Panc1 (cell line): ENCODE measurements at regions of chr15 and their contacts with region 1.

Region 1: DNA sequence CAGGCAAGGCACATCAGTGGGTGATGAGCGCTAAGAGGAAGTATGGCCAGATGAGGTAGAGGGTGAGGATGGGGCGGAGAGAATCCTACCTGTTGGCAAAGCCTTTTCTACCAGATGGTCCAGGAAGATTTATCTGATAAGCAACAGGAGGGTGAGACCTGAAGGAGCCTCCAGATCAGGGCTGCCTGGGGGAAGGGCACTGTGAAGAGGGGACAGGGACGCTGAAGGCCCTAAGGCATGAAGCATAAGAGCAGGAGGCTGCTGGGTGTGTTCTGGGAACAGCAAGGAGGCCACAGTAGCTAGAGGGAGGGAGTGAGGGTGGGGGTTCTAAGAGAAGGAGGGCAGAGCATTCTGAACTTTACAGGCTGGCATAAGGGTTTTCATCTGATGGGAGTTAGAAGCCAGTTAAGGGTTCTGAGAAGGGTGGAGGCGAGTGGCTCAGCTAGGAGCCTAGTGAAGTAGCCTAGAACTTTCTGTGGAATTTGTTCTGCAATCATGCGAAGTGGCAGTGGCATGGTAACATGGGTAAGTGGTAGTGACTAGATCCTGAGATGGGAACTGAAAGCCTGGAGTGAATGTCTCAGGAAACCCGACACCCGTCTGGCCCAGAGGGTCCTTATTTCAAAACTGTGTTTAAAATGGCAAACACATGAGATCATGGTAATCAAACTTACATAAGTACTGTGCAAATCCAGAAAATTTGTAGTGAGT is 29.9 kb downstream of the CGNL1 start:
- DNase-seq: no peak
- ATAC-seq: no peak
- H3K4me3 ChIP-seq: no peak overlapping the region
- H3K27ac ChIP-seq: no peak overlapping the region
- H3K4me1 ChIP-seq: no peaks in the 10 kb centered on the region
- H3K27me3 ChIP-seq: no peaks in the 10 kb centered on the region
- CTCF ChIP-seq: no peak

Region 2: GRCh38 chr15:56180851-56181250 is 1225.4 kb before region 1 on chr15:
- CTCF ChIA-PET with region 1: no interaction called
- POLR2A ChIA-PET with region 1: interaction called, 14 read pairs
- in situ Hi-C with region 1: no loop called
- intact Hi-C with region 1: no loop called
- DNase-seq: no peak
- ATAC-seq: no peak
- H3K4me3 ChIP-seq: no peak overlapping the region
- H3K27ac ChIP-seq: no peak overlapping the region
- H3K4me1 ChIP-seq: no peaks in the 10 kb centered on the region
- H3K27me3 ChIP-seq: no peaks in the 10 kb centered on the region
- CTCF ChIP-seq: no peak